AG04450 (cell line): ENCODE measurements at regions of chr1 and their contacts with region 1.

Region 1: DNA sequence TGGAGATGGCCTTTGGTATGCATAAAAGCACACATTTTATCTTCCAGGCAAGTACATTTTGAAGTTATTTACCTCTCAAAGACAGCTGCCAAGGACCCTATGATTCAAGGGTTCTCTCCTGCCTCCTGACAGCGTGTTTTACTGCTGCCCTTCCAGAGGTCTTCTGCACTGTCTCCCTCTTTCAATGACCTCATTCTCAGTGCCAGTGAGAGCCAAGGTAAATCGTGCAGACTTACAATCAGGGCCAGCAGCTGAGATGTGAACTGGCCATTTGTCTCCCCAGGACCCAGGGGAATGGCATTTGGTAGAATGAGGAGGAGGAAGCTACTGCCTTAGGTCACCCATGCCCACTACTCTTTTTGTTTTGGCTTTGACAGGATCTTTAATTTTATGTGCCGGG is 84.2 kb upstream of the FGGY start:
- DNase-seq: no peak
- H3K4me3 ChIP-seq: no peak overlapping the region
- H3K27ac ChIP-seq: no peak overlapping the region
- H3K27me3 ChIP-seq: no peaks in the 10 kb centered on the region
- CTCF ChIP-seq: no peak

Region 2: DNA sequence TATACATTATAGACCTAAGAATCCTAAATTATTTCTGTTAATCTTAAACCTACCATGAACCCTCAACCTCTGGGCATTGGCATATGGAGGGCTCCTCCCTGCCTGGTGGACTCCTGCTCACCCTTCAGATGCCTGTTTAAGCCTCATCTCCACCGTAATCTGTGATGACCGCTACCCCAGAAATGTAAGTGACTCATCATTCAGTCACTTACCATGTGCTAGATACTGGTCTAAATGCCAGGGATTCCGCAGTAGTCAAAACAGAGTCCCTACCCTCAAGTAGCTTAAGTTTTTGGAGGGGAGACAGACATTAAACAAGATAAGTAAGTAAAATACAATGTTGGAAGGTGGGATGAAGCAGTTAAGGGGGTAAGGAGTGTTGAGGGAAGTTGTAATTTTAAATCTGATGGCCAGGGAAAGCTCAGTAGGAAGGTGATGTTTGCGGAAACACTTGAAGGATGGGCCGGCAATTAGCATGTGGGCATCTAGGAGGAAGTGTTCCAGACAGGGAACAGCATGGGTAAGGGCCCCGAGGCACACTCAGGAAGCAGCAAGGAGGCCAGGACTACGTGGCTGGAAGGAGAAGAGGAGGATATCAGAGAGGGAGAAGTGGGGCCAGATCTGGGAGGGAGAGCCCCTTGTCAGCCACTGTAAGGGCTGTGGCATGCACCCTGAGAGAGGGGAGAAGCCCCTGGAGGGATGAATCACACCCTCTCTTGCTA is 460.3 kb after region 1 on chr1:
- CTCF ChIA-PET with region 1: interaction called, 11 read pairs
- POLR2A ChIA-PET with region 1: no interaction called
- DNase-seq: no peak
- H3K4me3 ChIP-seq: no peak overlapping the region
- H3K27ac ChIP-seq: no peak overlapping the region
- H3K27me3 ChIP-seq: no peaks in the 10 kb centered on the region
- CTCF ChIP-seq: no peak